Mammary epithelial cell (primary cell): ENCODE measurements at regions of chr1 and their contacts with region 1.

Region 1: DNA sequence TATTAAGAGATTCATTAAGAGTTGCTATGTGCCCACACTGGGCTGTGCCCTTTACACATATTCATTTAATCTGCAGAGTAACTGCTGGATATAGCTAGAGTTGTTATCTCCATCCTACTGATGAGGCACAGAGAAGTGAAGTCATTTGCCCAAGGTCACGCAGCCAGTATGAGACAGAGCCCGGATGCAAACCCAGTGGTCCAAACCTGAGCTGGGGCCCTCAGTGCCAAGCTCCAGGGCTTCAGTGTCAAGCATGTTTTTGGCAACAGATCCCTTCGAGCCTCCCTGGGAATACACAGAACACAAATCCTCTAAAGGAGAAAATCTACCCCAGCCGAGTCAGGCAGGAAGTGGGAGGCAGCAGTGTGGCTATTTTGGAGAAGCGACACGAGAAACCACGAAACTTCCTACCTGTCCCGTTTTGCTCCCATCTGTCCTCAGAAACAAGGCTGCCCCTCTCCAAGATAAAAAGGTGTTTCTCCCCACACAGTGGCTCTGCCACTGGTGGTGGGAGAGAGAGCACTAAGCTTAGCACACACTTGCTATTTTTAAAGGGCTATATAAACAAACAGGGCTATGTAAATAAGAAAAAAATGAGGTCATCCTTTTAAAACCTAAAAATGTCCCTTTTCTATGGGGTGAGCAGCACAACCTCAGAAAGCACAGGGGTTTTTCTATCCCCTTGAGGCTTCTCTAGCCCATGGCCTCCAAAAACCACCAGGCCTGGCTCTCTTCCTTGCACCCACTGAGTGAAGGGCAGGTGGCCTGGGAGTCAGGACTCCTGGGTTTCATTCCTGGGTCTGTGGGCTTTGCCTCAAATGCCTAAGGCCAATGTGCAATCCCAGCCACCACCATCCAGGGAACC is 138.6 kb upstream of the EDN2 start:
- DNase-seq: no peak
- H3K4me3 ChIP-seq: no peak overlapping the region
- H3K27ac ChIP-seq: no peak overlapping the region
- H3K4me1 ChIP-seq: peaks cover 57% of the 10 kb centered on the region
- H3K27me3 ChIP-seq: no peaks in the 10 kb centered on the region
- CTCF ChIP-seq: no peak

Region 2: GRCh38 chr1:41683681-41684500 is 60.8 kb after region 1 on chr1:
- CTCF ChIA-PET with region 1: no interaction called
- dilution Hi-C with region 1: loop called (anchors 5 kb)
- in situ Hi-C with region 1: no loop called
- intact Hi-C with region 1: no loop called
- DNase-seq: no peak
- H3K4me3 ChIP-seq: no peak overlapping the region
- H3K27ac ChIP-seq: no peak overlapping the region
- H3K4me1 ChIP-seq: peaks cover 42% of the 10 kb centered on the region
- H3K27me3 ChIP-seq: no peaks in the 10 kb centered on the region
- CTCF ChIP-seq: no peak